ENCODE measurements at regions of chr20 and their contacts with region 1.

Region 1: DNA sequence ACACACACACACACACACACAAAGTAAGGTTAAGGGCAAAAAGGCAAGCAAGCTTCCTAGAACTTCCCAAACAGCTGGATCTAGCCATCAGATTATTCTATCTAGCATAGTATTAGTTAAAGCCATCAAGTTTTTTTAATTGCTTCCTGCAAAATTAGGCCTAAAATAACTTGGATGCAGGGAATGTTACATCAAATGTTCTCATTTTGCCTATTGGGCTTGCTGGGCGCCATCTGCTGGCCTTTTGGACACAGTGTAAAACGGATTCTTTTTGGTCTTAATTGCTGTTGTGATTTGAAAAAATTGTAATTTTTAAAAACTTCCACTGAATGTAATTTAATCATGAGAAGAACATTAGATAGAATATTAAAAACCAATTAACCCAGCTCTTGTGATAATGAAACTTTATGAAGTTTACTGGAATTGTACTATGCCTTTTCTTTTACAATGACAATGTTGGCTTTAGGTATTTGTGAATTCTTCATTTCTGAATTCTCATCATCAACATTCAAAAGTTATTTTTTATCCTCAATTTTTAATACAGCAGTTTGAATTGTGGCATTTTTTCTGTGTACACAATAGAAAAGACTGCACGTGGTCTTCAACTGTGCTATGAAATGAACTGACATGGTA is 6.8 kb downstream of the MKKS start:
- DNase-seq: peak; percentile 59
- ATAC-seq: peak; percentile 30
- H3K4me3 Mint-ChIP-seq: no peak overlapping the region
- H3K27ac Mint-ChIP-seq: no peak overlapping the region
- H3K4me1 Mint-ChIP-seq: peaks cover 33% of the 10 kb centered on the region
- H3K27me3 Mint-ChIP-seq: no peaks in the 10 kb centered on the region

Region 2: GRCh38 chr20:9978397-9979004 is 448.7 kb before region 1 on chr20:
- CTCF ChIA-PET with region 1: interaction called, 18 read pairs
- DNase-seq: peak; percentile 60
- ATAC-seq: peak; percentile 92
- H3K4me3 Mint-ChIP-seq: no peak overlapping the region
- H3K27ac Mint-ChIP-seq: no peak overlapping the region
- H3K4me1 Mint-ChIP-seq: peaks cover 2% of the 10 kb centered on the region
- H3K27me3 Mint-ChIP-seq: peaks cover 12% of the 10 kb centered on the region

Region 3: GRCh38 chr20:10316582-10316981 is 110.6 kb before region 1 on chr20:
- CTCF ChIA-PET with region 1: interaction called, 23 read pairs
- DNase-seq: no peak
- ATAC-seq: no peak
- H3K4me3 Mint-ChIP-seq: no peak overlapping the region
- H3K27ac Mint-ChIP-seq: no peak overlapping the region
- H3K4me1 Mint-ChIP-seq: peaks cover 3% of the 10 kb centered on the region
- H3K27me3 Mint-ChIP-seq: peaks cover 29% of the 10 kb centered on the region

Measured in activated CD8-positive, alpha-beta memory T cell treated with anti-CD3 and anti-CD28 coated beads, Interleukin-2, amount 10 ng/mL, durations not matched to agents 7 days and 5 days (primary cell).